HepG2 (cell line): ENCODE measurements at regions of chr18 and their contacts with region 1.

Region 1: DNA sequence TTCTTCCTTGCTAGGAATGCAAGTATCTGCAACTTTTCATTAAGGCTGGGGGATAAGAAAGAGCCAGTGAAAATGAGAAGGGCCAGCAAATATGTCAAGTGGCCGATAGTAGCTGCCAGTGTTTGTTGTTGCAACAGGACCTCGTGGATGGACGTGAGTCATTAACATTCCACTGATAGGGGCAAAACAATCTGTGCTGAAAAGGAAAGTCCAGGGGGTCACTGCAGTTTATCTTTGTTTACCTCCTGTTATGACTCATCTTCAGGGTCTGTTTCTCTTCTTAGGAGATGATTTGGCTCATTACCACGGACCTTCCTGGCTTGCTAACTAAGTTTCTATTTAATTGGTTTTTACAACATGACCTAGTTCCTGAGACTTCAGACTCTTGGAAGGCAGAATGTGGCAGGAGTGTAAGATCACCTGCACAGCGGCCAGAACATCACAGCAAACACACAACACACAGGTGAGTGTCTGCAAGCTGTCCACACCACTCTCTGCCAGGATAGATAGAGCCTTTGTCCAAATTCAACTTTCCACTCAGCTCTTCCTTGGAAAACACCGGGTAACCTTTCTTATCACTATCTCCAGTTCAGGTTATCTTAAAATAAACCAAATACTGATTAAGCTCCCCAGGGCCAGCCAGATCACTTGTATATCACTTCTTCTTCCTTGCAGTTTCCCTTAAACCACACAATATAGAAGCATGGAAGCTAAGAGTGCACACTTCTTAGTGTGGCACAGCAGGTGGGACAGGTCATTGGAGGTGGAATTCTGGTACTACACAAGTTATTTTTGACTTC is 157.5 kb upstream of the LMAN1 start:
- DNase-seq: peak; percentile 94
- ATAC-seq: peak; percentile 96
- H3K4me3 ChIP-seq: peak overlapping the region in 1 of 3 experiments; percentile 18; a peak in 1 of 6 replicates
- H3K27ac ChIP-seq: peak overlapping the region; percentile 43
- H3K4me1 ChIP-seq: peaks cover 40% of the 10 kb centered on the region
- H3K27me3 ChIP-seq: peaks cover 0 to 24% of the 10 kb centered on the region in 2 experiments; a peak in 2 of 5 replicates
- CTCF ChIP-seq: no peak
- EP300 ChIP-seq: peak; percentile 82 to 90
- POLR2A ChIP-seq: no peak
- RAD21 ChIP-seq: peak; percentile 31; the same call in 1 of the 2 replicates

Region 2: DNA sequence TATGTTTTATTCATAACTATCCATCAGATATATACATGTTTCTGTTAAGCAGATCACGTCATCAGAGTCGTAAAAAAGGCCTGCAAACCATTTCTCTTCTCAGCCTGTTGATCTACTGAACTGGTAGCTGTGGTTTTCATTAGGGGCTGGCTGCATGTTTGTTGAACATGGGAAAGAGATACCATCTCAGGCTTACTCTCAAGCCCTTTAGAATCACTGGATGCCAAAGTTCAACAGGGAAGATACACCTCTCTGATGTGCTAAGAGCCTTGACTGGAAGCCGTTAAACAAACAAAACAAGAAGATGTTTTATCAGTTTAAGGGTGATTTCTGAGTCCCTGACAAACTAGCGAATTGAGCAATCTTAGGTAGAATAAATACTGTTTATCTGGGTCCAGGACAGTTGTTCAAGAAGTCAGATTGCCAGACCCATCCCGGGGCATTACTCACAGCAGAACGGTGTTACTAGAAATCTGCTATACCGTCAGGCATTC is 63.0 kb before region 1 on chr18:
- CTCF ChIA-PET with region 1: no interaction called
- POLR2A ChIA-PET with region 1: no interaction called
- in situ Hi-C with region 1: no loop called
- intact Hi-C with region 1: loop called (anchors 2 kb)
- DNase-seq: peak; percentile 97
- ATAC-seq: peak; percentile 93
- H3K4me3 ChIP-seq: no peak overlapping the region
- H3K27ac ChIP-seq: no peak overlapping the region
- H3K4me1 ChIP-seq: peaks cover 40% of the 10 kb centered on the region
- H3K27me3 ChIP-seq: peaks cover 5 to 64% of the 10 kb centered on the region in 2 experiments; a peak in 3 of 5 replicates
- CTCF ChIP-seq: no peak
- EP300 ChIP-seq: peak; percentile 69 to 91; a peak in 3 of 4 replicates
- POLR2A ChIP-seq: no peak
- RAD21 ChIP-seq: no peak